ENCODE measurements at regions of chr17 and their contacts with region 1.

Region 1: DNA sequence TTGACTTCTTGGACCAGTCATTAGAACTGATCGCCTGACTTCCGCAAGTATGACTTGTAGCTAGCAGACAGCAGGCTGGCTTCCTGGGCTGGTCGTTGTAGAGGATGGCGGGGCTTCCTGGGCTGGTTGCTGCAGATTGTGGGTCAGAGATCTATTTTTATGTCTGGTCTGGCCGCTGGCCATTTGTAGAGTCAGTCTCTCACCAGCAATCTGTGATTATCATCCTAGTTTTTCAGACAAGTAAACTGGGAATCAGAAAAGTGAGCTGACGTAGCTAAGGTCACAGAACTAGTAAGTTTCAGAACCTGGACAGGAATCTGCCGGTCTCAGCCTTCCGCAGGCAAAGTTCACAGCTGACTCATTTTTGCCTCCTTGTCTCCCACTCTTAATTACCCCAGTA is 19.1 kb downstream of the GPR142 start:
- DNase-seq: peak; percentile 15 to 29 (median 27)
- H3K4me3 ChIP-seq: no peak overlapping the region
- H3K4me3 Mint-ChIP-seq: no peak overlapping the region
- H3K27ac ChIP-seq: no peak overlapping the region
- H3K27ac Mint-ChIP-seq: peak overlapping the region in 1 of 7 donors; percentile 65
- H3K4me1 ChIP-seq: peaks cover 7 to 19% of the 10 kb centered on the region in 2 donors
- H3K4me1 Mint-ChIP-seq: peaks cover 21% of the 10 kb centered on the region
- H3K27me3 ChIP-seq: no peaks in the 10 kb centered on the region
- H3K27me3 Mint-ChIP-seq: peaks cover 8 to 20% (median 16%) of the 10 kb centered on the region in 3 donors
- CTCF ChIP-seq: no peak

Region 2: DNA sequence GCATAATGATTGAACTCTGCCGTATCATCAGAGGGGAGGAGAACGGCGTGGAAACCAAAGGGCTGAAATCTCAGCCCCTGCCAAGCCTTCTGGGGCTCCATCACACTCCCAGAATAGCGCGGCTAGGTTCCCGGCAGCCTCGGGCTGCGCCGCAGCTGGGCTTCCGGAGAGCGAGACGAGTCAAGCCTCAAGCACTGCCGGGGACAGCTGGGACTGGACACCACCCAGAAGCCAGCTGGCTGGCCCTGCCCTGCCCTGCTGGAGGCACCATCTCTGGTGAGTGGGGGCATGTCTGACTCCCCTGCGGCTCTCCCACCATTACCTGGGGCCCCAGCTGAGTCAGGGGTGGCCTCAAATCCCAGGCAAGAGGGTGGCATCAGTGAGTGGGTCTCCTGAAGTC is 38.3 kb after region 1 on chr17:
- intact Hi-C with region 1: loop called in 1 of 2 experiments (anchors 5 kb)
- DNase-seq: no peak
- H3K4me3 ChIP-seq: no peak overlapping the region
- H3K4me3 Mint-ChIP-seq: no peak overlapping the region
- H3K27ac ChIP-seq: no peak overlapping the region
- H3K27ac Mint-ChIP-seq: no peak overlapping the region
- H3K4me1 ChIP-seq: no peaks in the 10 kb centered on the region
- H3K4me1 Mint-ChIP-seq: no peaks in the 10 kb centered on the region
- H3K27me3 ChIP-seq: peaks cover 3 to 18% of the 10 kb centered on the region in 2 donors
- H3K27me3 Mint-ChIP-seq: peaks cover 27 to 54% (median 45%) of the 10 kb centered on the region in 3 donors
- CTCF ChIP-seq: no peak

Measured in CD14-positive monocyte (primary cell).